Head of caudate nucleus (tissue), 42 donors: ENCODE measurements at regions of chr22 and their contacts with region 1.

Region 1: GRCh38 chr22:35840302-35840739 is 122.6 kb downstream of the APOL5 start:
- DNase-seq: peak; percentile 31 to 90 (median 75)

Region 2: GRCh38 chr22:36028646-36029405 is 188.5 kb after region 1 on chr22 and contains the start of gene RBFOX2:
- intact Hi-C with region 1: loop called (anchors 10 kb)
- DNase-seq: peak; percentile 89 to 98 (median 95)